ENCODE measurements at regions of chr6 and their contacts with region 1.

Region 1: DNA sequence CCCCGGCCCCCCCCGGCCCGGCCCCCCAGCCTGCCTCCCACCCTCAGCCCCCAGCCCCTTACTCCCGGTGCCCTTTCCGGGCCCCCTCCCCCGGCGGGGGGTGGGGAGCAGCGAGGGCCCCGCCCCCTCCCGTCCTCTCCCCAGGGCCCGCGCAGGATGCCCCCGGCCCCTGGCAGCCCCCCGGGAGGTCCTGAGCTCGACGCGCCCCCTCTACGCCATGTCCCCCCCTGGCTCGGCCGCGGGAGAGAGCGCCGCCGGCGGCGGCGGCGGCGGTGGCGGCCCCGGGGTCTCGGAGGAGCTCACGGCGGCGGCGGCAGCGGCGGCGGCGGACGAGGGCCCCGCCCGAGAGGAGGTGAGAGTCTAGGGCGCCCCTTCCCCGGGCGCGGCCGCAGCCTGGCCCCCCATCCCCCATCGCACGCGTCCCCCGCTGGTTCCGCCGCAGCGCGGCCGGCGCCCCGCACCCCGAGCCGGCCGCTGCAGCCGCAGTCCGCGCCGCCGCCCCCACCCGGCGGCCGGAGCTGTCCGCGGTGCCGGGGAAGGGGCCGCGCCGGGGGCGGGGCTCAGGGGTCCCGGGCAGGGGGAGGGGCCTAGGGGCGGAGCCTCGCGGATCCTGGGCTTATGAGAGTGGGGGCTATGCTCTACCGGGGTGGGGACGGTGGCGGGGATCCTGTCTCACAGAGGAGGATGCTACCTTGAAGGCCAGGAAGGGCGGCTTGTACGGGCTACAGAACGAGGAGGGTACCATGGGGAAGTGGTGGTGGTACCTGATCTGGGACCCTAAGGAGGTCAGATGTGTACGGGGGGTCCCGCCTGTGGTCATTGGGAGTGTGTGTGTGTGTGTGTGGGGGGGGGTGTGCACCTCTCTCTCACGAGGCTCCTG is 516 bp downstream of the TMEM151B start:
- DNase-seq: no peak
- H3K4me3 ChIP-seq: no peak overlapping the region
- H3K27ac ChIP-seq: no peak overlapping the region
- H3K4me1 ChIP-seq: no peaks in the 10 kb centered on the region
- H3K27me3 ChIP-seq: peaks cover 38% of the 10 kb centered on the region

Region 2: DNA sequence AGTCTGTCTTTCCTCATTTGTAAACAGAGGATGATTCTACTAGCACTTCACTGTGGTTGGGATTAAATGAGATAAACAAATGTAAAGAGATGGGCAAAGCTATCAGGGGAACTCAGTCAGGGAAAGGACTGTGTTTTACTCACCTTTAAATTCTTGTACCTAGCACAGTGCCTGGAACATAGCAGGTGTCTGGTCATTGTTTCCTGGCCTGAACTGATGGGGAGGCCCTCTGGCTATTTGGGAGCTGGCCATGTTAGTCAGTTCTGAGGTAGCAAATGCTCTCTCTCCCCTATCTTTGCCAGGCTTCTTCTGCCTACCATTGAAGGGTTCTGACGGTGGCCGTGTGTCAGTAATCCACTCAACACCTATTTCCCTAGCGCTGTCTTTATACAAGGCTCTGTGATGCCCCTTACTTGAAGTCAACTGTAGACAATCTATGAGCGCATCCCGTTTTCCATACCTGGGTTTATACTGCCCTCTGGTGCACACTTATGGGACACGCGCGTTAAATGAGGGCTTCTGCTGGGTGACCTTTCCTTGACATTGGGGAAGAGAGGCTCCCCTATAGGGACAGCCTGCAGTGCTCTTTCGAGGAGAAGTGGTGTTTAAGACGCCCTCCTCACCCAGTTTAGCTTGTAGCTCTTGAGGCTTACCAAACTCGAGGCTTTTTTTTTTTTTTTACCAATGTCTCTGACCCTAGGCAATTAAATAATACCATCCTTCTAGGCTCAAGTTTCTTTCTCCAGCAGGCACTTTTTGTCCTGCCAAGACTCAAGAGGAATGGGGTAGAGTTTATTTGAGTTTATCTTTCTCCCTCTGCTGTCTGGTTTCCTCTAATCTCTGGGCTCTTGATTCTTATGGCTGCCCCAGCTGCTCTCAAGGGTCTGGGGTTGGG is 67.7 kb after region 1 on chr6:
- in situ Hi-C with region 1: loop called (anchors 5 kb)
- DNase-seq: peak; percentile 77
- H3K4me3 ChIP-seq: no peak overlapping the region
- H3K27ac ChIP-seq: no peak overlapping the region
- H3K4me1 ChIP-seq: no peaks in the 10 kb centered on the region
- H3K27me3 ChIP-seq: peaks cover 28% of the 10 kb centered on the region

Measured in GM23248 (cell line).